Activated CD8-positive, alpha-beta memory T cell treated with anti-CD3 and anti-CD28 coated beads, Interleukin-2, amount 10 ng/mL, durations not matched to agents 7 days and 5 days (primary cell): ENCODE measurements at regions of chr22 and their contacts with region 1.

Region 1: DNA sequence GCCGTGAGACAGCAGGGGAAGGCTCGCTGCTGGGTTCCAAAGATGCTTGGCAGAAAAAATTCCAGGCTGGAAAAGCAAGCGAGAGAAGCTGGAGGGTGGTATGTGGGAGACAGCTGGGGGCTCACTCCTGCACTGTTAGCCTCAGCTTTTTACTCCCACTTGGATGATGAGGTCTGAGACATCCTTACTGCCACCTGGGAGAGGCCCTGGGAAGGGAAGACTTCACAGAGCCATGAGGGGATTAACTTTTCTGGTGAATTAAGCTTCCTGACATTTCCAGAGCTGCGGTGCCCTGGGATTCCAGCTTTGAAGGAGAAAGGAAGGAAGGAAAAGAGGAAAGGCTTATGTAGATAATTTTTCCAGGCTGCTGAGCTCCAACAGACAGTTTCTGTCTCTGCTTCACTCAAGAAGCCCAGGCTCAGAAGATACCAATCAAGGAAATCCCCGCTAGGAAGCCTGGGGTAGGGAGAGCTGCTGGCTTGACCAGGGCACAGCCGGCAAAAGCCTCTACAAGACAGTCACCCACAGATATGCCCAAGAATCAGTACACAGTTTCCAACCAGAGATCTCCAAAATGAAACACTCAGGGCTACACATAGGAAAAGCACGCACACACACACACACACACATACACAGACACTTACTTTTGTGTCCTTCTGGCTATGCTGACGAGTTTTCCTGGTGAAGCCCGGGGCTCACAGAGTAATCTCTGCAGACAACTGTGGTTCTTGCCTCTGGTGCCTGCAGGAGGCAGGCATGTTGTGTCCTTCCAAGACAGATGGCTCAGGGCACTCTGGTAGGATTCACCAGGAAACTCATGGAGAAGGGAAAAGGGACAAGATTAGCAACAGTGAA is 907 bp downstream of the MCHR1 start:
- DNase-seq: no peak
- ATAC-seq: no peak
- H3K4me3 Mint-ChIP-seq: no peak overlapping the region
- H3K27ac Mint-ChIP-seq: no peak overlapping the region
- H3K4me1 Mint-ChIP-seq: peaks cover 31% of the 10 kb centered on the region
- H3K27me3 Mint-ChIP-seq: peaks cover 16% of the 10 kb centered on the region

Region 2: DNA sequence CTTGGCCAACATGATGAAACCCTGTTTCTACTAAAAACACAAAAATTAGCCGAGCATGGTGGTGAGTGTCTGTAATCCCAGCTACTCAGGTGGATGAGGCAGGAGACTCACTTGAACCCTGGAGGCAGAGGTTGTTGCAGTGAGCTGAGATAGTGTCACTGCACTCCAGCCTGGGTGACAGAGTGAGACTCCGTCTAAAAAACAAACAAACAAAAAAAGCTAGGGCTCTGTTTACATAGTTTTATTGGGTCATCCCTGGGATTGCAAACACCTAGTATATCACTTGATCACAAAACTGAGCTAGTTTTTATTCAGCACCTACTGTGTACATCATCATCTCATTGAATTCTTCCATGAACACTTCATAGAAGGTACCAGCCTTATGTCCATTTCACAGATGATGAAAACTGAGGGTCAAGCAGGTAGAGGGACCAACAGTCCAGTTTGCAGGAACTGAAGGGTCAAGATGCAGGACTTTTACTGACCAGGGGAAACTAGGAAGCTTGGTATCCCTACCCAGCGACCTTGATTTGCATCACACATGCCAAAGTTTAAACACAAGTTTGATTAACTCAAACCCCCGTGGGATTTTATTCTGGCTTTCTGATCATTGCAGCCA is 34.5 kb before region 1 on chr22:
- CTCF ChIA-PET with region 1: interaction called, 18 read pairs
- DNase-seq: no peak
- ATAC-seq: no peak
- H3K4me3 Mint-ChIP-seq: no peak overlapping the region
- H3K27ac Mint-ChIP-seq: no peak overlapping the region
- H3K4me1 Mint-ChIP-seq: peaks cover 19% of the 10 kb centered on the region
- H3K27me3 Mint-ChIP-seq: no peaks in the 10 kb centered on the region

Region 3: DNA sequence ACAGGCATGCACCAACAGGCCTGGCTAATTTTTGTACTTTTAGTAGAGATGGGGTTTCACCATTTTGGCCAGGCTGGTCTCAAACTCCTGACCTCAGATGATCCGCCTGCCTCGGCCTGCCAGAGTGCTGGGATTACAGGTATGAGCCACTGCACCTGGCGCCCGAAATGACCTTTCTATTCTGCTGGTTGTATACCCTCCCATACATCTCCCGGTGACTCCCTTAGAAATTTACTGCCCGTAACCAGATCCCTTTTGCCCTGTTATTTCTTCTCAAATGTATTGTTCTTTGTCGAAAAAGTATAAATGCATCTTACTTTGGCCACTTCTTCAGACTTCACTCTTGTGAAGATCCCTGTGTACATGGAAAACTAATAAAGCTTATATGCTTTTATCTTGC is 21.1 kb after region 1 on chr22:
- CTCF ChIA-PET with region 1: interaction called, 11 read pairs
- DNase-seq: no peak
- ATAC-seq: no peak
- H3K4me3 Mint-ChIP-seq: no peak overlapping the region
- H3K27ac Mint-ChIP-seq: no peak overlapping the region
- H3K4me1 Mint-ChIP-seq: no peaks in the 10 kb centered on the region
- H3K27me3 Mint-ChIP-seq: peaks cover 11% of the 10 kb centered on the region

Region 4: DNA sequence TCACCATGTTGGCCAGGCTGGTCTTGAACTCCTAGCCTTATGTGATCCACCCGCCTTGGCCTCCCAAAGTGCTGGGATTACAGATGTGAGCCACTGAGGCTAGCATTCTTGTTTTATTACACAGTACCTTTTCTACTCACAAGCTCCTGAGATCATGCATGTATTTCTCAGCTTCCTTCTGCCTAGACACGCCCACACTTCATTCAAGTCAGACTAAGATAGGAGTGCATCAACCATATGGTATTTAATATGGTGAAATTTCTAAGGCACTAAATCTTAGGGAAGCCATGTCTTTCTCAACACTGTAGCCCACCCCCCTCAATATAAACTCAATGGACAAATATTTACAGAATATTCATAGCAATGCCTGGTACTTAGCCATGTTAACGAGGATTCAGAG is 76.9 kb after region 1 on chr22:
- CTCF ChIA-PET with region 1: interaction called, 116 read pairs
- DNase-seq: no peak
- ATAC-seq: no peak
- H3K4me3 Mint-ChIP-seq: no peak overlapping the region
- H3K27ac Mint-ChIP-seq: no peak overlapping the region
- H3K4me1 Mint-ChIP-seq: no peaks in the 10 kb centered on the region
- H3K27me3 Mint-ChIP-seq: peaks cover under 1% of the 10 kb centered on the region

Region 5: GRCh38 chr22:40791241-40791640 is 111.0 kb after region 1 on chr22:
- CTCF ChIA-PET with region 1: no interaction called
- DNase-seq: no peak
- ATAC-seq: no peak
- H3K4me3 Mint-ChIP-seq: no peak overlapping the region
- H3K27ac Mint-ChIP-seq: no peak overlapping the region
- H3K4me1 Mint-ChIP-seq: peaks cover 3% of the 10 kb centered on the region
- H3K27me3 Mint-ChIP-seq: no peaks in the 10 kb centered on the region

Region 6: DNA sequence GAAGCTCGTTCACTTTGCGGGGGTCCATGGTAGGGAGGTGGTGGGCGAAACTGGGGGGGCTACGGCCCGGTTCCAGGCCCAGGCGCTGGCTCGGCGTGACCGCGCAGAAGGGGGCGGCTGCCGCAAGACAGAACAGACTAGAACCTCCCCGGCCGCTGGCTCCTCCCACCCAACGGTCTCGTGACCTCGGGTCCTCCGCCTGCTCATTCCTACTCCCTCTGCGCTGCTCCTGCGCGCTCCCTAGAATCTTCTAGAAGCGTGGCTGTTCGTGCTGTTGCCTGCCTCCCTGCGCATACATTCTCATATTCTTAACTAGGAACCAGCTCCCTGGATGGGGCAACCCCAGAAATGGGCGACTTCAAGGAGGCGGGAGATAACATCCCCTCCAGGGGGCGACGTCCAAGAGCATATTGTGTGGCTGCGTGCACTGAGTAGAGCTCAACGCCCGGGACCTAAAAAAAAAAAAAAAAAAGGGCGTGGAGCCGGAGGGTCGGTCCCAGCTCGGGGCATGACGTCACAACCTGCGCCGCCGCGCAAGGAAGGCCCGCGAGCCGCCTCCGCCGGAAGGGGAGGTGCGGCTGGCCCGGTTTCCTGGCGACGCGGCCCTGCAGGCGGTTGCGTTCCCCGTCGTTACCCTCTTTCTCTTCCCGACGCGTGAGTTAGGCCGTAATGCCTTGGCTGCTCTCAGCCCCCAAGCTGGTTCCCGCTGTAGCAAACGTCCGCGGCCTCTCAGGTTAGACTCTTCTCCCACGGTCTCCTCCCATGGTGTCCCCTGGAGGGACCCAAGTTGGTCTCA is 176.5 kb after region 1 on chr22 and contains the starts of genes ST13 and XPNPEP3:
- CTCF ChIA-PET with region 1: interaction called, 11 read pairs
- DNase-seq: peak; percentile 98
- ATAC-seq: peak; percentile 94
- H3K4me3 Mint-ChIP-seq: peak within 1 kb of the TSS; percentile 93
- H3K27ac Mint-ChIP-seq: peak within 1 kb of the TSS; percentile 100
- H3K4me1 Mint-ChIP-seq: peaks cover 45% of the 10 kb centered on the region
- H3K27me3 Mint-ChIP-seq: no peaks in the 10 kb centered on the region
- total RNA-seq, gene ST13: 120 to 150 TPM
- total RNA-seq, gene XPNPEP3: 11.2 to 12.5 TPM